Sigmoid colon (tissue), 7 donors: ENCODE measurements at regions of chr2 and their contacts with region 1.

Region 1: GRCh38 chr2:160493227-160494028 is at the start of gene RBMS1:
- DNase-seq: peak; percentile 83
- H3K4me3 ChIP-seq: peak within 1 kb of the TSS; percentile 81 to 98 (median 90)
- H3K27ac ChIP-seq: peak within 1 kb of the TSS; percentile 91 to 99 (median 95)
- H3K4me1 ChIP-seq: peaks cover 0 to 33% (median 16%) of the 10 kb centered on the region in 4 donors
- H3K27me3 ChIP-seq: no peaks in the 10 kb centered on the region
- CTCF ChIP-seq: no peak
- EP300 ChIP-seq: no peak
- POLR2A ChIP-seq: peak in 1 of 2 donors; percentile 15
- total RNA-seq, gene RBMS1: 69.2 to 91.8 (median 77.1) TPM

Region 2: GRCh38 chr2:160324161-160324800 is 169.1 kb before region 1 on chr2:
- intact Hi-C with region 1: loop called (anchors 5 kb)
- DNase-seq: peak; percentile 77
- H3K4me3 ChIP-seq: no peak overlapping the region
- H3K27ac ChIP-seq: peak overlapping the region in 2 of 4 donors; percentile 51 to 57
- H3K4me1 ChIP-seq: peaks cover 0 to 71% (median 62%) of the 10 kb centered on the region in 4 donors
- H3K27me3 ChIP-seq: no peaks in the 10 kb centered on the region
- CTCF ChIP-seq: peak; percentile 51 to 70 (median 64)
- EP300 ChIP-seq: no peak
- POLR2A ChIP-seq: no peak

Region 3: GRCh38 chr2:160429248-160430000 is 64.0 kb before region 1 on chr2:
- intact Hi-C with region 1: loop called (anchors 1 kb)
- DNase-seq: no peak
- H3K4me3 ChIP-seq: no peak overlapping the region
- H3K27ac ChIP-seq: peak overlapping the region; percentile 58 to 77 (median 66)
- H3K4me1 ChIP-seq: peaks cover 0 to 62% (median 30%) of the 10 kb centered on the region in 4 donors
- H3K27me3 ChIP-seq: no peaks in the 10 kb centered on the region
- CTCF ChIP-seq: peak; percentile 25 to 60 (median 44)
- EP300 ChIP-seq: no peak
- POLR2A ChIP-seq: no peak

Region 4: GRCh38 chr2:160666154-160667060 is 173.0 kb after region 1 on chr2:
- intact Hi-C with region 1: loop called (anchors 5 kb)
- DNase-seq: no peak
- H3K4me3 ChIP-seq: peak overlapping the region in 3 of 4 donors; percentile 8 to 22 (median 19)
- H3K27ac ChIP-seq: peak overlapping the region; percentile 72 to 88 (median 82)
- H3K4me1 ChIP-seq: peaks cover 0 to 23% (median 19%) of the 10 kb centered on the region in 4 donors
- H3K27me3 ChIP-seq: no peaks in the 10 kb centered on the region
- CTCF ChIP-seq: no peak
- EP300 ChIP-seq: peak; percentile 9 to 93 (median 76)
- POLR2A ChIP-seq: no peak